Activated naive CD4-positive, alpha-beta T cell treated with anti-CD3 and anti-CD28 coated beads for 36 hours (primary cell): ENCODE measurements at regions of chr1 and their contacts with region 1.

Region 1: DNA sequence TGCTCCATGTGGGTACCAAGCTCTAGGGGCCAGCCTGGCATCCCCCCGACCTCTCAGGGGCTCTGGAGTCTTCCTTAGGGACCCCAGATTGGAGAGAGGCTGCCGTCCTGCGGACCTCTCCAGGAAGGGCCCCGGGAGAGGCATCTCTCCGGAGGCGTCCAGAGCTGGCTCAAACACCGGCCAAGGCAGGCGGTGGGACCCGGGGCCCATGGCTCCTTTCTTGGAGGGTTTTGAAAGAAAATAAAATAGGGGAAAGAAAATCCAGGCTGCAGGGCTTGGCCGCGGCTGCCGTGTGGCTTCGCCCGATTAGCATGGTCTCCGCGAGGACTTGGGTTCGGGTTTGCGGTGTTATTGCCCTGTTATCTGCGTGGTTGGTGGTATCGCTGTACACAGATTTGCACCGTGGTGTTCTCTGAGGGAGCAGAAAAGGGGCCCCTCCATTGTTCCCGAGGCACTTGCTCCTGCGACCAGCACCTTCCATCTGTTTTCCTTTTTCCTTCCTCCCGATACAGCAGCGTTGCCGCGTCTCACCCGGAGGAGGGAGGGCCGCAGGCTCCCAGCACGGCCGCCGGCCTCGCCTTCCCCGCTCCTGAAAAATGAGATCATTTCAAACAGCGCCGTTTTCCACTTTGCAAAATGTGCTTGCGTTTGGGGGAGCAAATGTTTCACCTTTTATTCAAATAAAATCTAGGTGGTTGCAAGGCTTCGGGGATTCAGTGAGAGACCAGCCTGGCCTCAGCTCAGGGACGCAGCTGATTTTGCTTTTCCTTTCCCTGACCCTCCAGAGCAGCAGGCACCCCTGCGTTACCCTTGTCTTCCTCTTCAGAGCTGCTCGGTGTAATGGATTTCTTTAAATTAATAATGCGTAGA is 86.3 kb downstream of the PRDM16 start:
- DNase-seq: no peak
- H3K4me3 Mint-ChIP-seq: no peak overlapping the region
- H3K27ac Mint-ChIP-seq: no peak overlapping the region
- H3K4me1 Mint-ChIP-seq: no peaks in the 10 kb centered on the region
- H3K27me3 Mint-ChIP-seq: peaks cover 16% of the 10 kb centered on the region

Region 2: DNA sequence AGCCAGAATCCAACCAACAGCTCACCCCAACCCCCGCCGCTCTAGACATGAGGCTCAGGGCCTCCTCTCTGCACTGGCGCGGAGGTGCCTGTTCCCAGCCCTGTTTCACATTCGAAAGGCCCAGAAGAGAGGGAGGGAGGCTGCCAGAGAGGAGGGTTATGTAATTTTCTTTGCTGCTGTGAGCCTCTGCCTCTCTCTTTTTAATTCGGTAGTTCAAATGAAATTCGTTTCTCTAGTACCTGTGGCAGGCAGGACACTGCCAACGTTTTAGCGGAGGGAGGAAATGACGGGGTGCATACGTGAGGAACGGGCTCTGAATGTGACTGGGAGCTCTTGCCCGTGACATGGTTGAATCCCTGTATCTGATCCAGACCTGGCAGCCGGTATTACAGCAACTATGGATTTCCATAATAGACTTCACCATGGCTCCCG is 76.8 kb before region 1 on chr1:
- CTCF ChIA-PET with region 1: no interaction called
- intact Hi-C with region 1: no loop called
- DNase-seq: peak; percentile 30
- H3K4me3 Mint-ChIP-seq: no peak overlapping the region
- H3K27ac Mint-ChIP-seq: no peak overlapping the region
- H3K4me1 Mint-ChIP-seq: peaks cover 5% of the 10 kb centered on the region
- H3K27me3 Mint-ChIP-seq: peaks cover 18% of the 10 kb centered on the region

Region 3: GRCh38 chr1:3126756-3127597 is 28.3 kb before region 1 on chr1:
- CTCF ChIA-PET with region 1: no interaction called
- intact Hi-C with region 1: no loop called
- DNase-seq: no peak
- H3K4me3 Mint-ChIP-seq: no peak overlapping the region
- H3K27ac Mint-ChIP-seq: no peak overlapping the region
- H3K4me1 Mint-ChIP-seq: no peaks in the 10 kb centered on the region
- H3K27me3 Mint-ChIP-seq: no peaks in the 10 kb centered on the region

Region 4: GRCh38 chr1:3172431-3173380 is 17.4 kb after region 1 on chr1:
- CTCF ChIA-PET with region 1: no interaction called
- intact Hi-C with region 1: loop called (anchors 1 kb)
- DNase-seq: no peak
- H3K4me3 Mint-ChIP-seq: no peak overlapping the region
- H3K27ac Mint-ChIP-seq: no peak overlapping the region
- H3K4me1 Mint-ChIP-seq: no peaks in the 10 kb centered on the region
- H3K27me3 Mint-ChIP-seq: peaks cover 37% of the 10 kb centered on the region